ENCODE measurements at regions of chr11 and their contacts with region 1.

Region 1: DNA sequence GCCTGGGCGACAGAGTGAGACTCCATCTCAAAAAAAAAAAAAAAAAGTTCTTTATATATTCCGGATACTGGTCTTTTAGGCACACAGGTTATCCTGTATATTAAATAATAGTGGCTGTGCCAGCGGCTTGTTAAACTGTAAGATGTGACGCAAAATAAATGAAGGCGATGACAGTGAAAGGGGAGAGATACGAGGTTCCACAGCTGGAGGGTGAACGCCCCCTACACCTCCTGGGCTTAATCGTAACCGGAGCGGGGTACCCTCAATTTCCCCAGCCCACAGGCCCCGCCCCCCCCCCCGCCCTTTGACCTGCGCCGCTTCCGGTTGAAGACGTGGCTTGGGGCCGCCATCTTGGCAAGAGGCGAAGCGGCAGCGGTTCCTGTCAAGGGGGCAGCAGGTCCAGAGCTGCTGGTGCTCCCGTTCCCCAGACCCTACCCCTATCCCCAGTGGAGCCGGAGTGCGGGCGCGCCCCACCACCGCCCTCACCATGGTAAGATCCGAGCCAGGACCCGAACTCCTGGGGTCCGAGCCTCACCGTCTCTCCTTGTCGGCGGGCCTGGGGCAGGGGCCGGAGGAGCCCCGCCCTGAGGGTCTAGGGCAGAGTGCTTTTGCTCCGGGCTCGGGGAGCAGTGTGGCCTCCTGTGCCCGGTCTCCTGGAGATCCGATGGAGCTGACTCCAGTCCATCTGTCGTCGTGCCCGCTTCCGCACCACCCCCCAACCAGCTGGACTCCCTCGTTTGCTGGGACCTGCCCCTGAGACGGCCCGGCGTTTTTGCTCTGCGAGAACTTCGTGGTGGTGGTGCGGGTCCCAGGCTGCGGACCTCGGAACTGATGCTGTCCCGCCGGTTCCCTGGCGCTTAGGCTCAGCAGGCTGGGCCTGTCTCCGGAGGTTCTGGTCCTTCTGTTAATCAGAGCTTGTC is at the start of gene ARCN1:
- DNase-seq: peak; percentile 49 to 96 (median 76)

Region 2: DNA sequence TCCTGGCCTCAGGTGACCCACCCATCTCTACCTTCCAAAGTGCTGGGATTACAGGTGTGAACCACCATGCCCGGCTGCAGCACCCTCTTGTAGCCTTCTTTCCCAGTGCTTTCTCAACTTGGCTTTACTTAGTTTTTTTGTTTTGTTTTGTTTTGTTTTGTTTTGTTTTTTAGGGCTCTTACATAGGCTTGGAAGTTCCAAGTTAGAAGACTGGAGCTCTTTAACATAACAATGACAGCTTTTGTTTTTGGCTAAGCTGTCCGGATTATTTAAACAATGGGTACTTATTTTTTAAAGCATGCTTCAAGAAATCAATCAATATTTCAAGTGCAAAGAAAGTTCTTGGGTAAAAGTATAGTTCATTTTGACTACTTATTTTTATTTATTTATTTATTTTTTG is 110.1 kb before region 1 on chr11:
- intact Hi-C with region 1: no loop called
- DNase-seq: no peak

Region 3: GRCh38 chr11:118533662-118534363 is 38.5 kb before region 1 on chr11:
- intact Hi-C with region 1: loop called (anchors 2 kb)
- DNase-seq: peak in 8 of 10 donors; percentile 18 to 91 (median 50)

Measured in posterior cingulate gyrus (tissue), 11 donors.